Breast epithelium (tissue), 4 donors: ENCODE measurements at regions of chr20 and their contacts with region 1.

Region 1: DNA sequence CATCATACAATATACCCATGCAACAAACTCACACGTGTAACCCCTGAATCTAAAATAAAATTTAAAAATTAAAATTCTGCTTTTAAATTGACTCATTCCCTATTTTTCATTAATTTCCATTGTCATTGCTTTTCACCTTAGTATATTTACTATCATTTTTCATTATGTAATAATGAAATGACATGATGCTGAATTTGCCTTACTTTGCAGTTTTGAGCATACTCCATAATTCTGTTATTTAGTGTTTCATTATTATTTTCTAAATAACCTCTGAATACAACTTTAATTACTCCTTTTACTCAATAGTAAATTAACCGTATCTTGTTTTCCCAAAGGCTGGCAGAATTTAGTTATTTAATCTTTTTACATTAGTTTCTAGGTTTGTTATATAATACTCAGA is 719.6 kb downstream of the DOK5 start:
- DNase-seq: no peak
- H3K4me3 ChIP-seq: no peak overlapping the region
- H3K27ac ChIP-seq: no peak overlapping the region
- H3K4me1 ChIP-seq: no peaks in the 10 kb centered on the region
- H3K27me3 ChIP-seq: no peaks in the 10 kb centered on the region
- CTCF ChIP-seq: no peak
- POLR2A ChIP-seq: no peak

Region 2: DNA sequence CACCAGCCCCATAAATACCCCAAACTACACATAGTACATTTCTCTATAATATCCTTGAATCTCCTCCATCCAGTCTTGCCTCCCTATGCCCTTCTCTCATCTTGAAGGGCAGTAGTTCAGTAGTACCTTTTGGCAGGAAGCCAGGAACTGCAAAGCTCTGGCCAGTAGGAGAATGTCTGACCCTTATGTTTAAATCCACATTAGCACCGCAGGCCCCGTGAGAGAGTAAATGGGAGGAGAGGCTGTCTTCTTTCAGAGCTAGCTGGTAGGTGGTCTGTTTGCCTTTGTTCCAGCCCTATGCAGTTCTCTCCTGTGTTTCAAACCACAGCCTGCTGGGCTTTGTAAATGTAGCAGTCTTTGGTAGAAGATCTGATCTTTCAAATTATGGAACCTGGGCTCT is 28.9 kb before region 1 on chr20:
- intact Hi-C with region 1: no loop called
- DNase-seq: no peak
- H3K4me3 ChIP-seq: no peak overlapping the region
- H3K27ac ChIP-seq: no peak overlapping the region
- H3K4me1 ChIP-seq: no peaks in the 10 kb centered on the region
- H3K27me3 ChIP-seq: no peaks in the 10 kb centered on the region
- CTCF ChIP-seq: no peak
- POLR2A ChIP-seq: no peak

Region 3: DNA sequence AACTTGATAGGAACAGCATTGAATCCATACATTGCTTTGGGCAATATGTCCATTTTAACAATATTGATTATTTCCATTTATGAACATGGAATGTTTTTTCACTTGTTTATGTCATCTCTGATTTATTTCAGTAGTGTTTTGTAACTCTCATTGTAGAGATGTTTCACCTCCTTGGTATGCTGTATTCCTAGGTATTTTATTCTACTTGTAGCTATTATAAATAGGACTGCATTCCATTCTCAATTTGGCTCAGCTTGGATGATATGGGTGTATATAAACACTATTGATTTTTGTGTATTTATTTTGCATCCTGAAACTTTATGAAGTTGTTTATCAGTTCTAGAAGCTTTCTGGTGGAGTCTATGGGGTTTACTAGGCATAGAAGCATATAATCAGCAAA is 10.7 kb after region 1 on chr20:
- intact Hi-C with region 1: loop called (anchors 2 kb)
- DNase-seq: no peak
- H3K4me3 ChIP-seq: no peak overlapping the region
- H3K27ac ChIP-seq: no peak overlapping the region
- H3K4me1 ChIP-seq: no peaks in the 10 kb centered on the region
- H3K27me3 ChIP-seq: no peaks in the 10 kb centered on the region
- CTCF ChIP-seq: no peak
- POLR2A ChIP-seq: no peak

Region 4: DNA sequence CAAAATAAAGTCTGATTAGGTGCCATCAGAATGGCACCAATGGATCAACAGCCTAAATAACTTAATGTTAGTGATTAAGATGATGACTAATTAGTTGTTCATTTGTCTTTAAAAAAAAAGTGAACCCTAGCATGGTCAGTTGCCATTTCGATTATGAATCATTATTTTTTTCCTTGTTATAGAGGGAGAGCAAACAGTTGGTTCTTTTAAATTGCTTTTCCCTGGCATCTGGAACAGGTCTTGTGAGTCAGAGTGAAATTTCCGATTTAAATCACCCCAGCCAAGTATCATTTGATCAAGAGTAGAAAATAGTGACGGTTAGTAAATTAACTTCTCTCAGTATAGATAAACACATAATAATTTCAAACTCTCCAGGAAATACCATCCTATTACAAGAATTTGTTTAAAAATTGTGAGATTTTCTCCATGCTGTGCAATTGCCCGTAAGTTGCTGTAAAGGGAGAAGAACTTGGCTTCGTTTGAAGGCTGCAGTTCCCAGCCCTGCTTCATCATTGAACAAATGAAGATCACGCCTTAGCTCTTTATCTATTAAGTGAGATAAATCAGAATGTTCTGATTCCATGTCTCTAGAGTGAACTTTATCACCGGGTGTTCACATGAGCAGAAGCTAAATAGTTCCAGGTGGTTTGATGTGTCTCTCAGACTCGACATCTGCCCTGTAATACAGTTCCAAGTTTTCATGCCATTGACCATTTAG is 21.7 kb after region 1 on chr20:
- intact Hi-C with region 1: no loop called
- DNase-seq: no peak
- H3K4me3 ChIP-seq: no peak overlapping the region
- H3K27ac ChIP-seq: no peak overlapping the region
- H3K4me1 ChIP-seq: no peaks in the 10 kb centered on the region
- H3K27me3 ChIP-seq: no peaks in the 10 kb centered on the region
- CTCF ChIP-seq: no peak
- POLR2A ChIP-seq: no peak

Region 5: GRCh38 chr20:55415567-55416142 is 220.7 kb after region 1 on chr20:
- intact Hi-C with region 1: no loop called
- DNase-seq: no peak
- H3K4me3 ChIP-seq: no peak overlapping the region
- H3K27ac ChIP-seq: no peak overlapping the region
- H3K4me1 ChIP-seq: no peaks in the 10 kb centered on the region
- H3K27me3 ChIP-seq: no peaks in the 10 kb centered on the region
- CTCF ChIP-seq: no peak
- POLR2A ChIP-seq: no peak